ENCODE measurements at regions of chr3 and their contacts with region 1.

Region 1: DNA sequence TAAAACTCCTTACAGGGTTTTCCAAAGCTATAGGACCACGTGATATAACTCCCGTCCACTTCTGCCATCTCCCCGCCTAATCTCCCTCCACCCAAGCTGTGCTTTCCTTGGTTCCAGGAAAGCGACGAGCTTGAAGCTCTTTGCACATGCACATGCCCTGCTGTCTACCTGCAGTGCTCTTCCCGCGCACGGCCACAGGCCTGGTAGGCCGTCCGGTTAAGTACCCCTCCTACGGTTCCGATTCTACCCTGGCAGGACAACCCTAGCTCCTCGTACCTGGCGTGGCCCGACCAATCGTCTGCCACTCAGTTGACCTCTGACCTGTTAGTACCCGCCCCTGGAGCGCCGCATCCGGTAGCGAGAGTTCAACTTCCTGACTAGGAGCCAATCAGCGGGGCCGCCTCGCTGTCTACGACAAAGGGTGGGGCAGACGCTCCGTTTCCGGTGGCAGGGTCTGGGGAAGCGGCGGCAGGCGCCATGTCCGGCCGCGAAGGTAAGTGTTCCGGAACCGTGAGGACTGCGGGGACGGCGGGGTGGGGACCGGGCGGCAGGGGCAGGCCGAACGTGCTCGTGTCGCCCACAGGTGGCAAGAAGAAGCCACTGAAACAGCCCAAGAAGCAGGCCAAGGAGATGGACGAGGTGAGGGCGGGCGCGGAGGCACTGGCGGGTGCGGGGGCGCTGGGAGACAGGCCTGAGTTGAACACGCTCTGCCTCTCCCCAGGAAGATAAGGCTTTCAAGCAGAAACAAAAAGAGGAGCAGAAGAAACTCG is at the starts of genes CCDC51 and TMA7:
- DNase-seq: peak; percentile 98
- H3K4me3 Mint-ChIP-seq: peak within 1 kb of the TSS; percentile 88
- H3K27ac Mint-ChIP-seq: peak within 1 kb of the TSS; percentile 77
- H3K4me1 Mint-ChIP-seq: peaks cover 18% of the 10 kb centered on the region
- H3K27me3 Mint-ChIP-seq: no peaks in the 10 kb centered on the region
- CTCF ChIP-seq: no peak
- total RNA-seq, gene CCDC51: 31.9 and 32.5 TPM in 2 replicates
- total RNA-seq, gene TMA7: 356 and 372 TPM in 2 replicates

Region 2: DNA sequence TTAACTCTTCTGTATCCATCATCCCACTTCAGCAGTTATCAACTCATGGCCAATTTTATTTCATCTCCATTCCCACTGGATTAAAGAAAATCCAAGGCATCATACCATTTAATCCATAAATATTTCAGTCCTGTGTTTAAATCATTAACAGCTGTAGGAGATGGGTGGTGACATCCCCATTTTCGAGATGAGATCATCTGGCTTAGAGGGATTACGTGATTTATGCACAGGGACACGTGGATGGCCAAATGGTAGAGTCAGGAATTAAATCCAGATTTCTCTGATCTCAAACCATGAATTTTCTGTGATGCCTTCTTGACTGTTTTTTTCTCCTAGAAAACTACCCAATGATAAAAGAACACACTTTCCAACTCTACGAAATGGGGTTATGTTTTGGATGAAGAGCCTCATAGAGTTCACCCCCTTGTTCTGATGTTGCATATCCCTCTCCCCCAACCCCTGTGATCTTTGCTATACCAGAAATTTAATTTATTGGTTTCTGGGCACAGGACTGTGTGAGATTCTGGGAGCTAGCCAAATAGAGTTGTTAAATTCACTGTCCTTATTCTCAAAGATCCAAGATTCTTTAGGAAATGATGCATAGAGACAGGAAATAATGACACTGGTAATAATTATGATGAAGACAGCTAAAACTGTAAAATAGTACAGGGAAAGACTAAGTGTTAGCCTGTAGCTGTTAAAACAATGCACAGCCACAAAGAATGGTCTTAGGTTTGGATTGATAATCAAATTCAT is 191.7 kb before region 1 on chr3:
- CTCF ChIA-PET with region 1: interaction called, 14 read pairs
- POLR2A ChIA-PET with region 1: interaction called, 4 read pairs
- intact Hi-C with region 1: no loop called
- DNase-seq: no peak
- H3K4me3 Mint-ChIP-seq: no peak overlapping the region
- H3K27ac Mint-ChIP-seq: no peak overlapping the region
- H3K4me1 Mint-ChIP-seq: no peaks in the 10 kb centered on the region
- H3K27me3 Mint-ChIP-seq: no peaks in the 10 kb centered on the region
- CTCF ChIP-seq: no peak

Region 3: DNA sequence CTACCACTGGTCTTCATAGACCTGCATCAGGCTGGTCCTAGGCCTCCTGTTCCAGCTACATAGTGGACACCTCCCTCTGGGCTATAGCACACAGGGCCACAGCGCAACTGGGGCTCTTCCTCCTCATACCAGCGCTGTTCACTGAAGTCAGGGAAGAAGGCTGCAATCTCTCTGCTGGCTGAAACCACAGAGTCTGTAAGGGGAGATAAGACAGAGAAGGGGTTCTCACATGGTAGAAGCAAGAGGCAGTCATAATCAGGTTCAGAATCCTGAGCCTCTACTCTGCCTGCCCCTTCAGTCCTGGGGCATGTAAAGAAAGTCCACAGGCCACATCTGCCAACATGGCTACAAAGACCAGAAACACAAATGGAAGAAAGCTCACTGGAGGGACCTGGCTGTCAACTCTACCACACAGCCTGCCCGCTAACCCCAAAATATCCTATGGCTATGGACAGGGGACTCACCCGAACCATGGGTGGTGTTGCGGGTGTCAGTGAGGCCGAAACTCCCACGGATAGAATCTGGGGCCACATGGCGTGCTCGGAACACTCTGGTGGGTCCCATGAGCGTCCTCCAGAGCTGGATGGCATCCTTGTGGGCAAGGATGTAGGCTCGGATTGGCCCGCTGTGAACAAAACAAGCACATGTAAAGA is 145.3 kb before region 1 on chr3:
- CTCF ChIA-PET with region 1: interaction called, 18 read pairs
- POLR2A ChIA-PET with region 1: no interaction called
- intact Hi-C with region 1: no loop called
- DNase-seq: no peak
- H3K4me3 Mint-ChIP-seq: no peak overlapping the region
- H3K27ac Mint-ChIP-seq: no peak overlapping the region
- H3K4me1 Mint-ChIP-seq: peaks cover 4% of the 10 kb centered on the region
- H3K27me3 Mint-ChIP-seq: no peaks in the 10 kb centered on the region
- CTCF ChIP-seq: no peak

Region 4: GRCh38 chr3:48372377-48372770 is 67.6 kb before region 1 on chr3:
- CTCF ChIA-PET with region 1: interaction called, 10 read pairs
- POLR2A ChIA-PET with region 1: no interaction called
- intact Hi-C with region 1: no loop called
- DNase-seq: no peak
- H3K4me3 Mint-ChIP-seq: no peak overlapping the region
- H3K27ac Mint-ChIP-seq: no peak overlapping the region
- H3K4me1 Mint-ChIP-seq: no peaks in the 10 kb centered on the region
- H3K27me3 Mint-ChIP-seq: peaks cover 3% of the 10 kb centered on the region
- CTCF ChIP-seq: no peak

Region 5: GRCh38 chr3:48422270-48422669 is 17.7 kb before region 1 on chr3:
- CTCF ChIA-PET with region 1: interaction called, 647 read pairs
- POLR2A ChIA-PET with region 1: interaction called, 749 read pairs
- intact Hi-C with region 1: no loop called
- DNase-seq: no peak
- H3K4me3 Mint-ChIP-seq: no peak overlapping the region
- H3K27ac Mint-ChIP-seq: no peak overlapping the region
- H3K4me1 Mint-ChIP-seq: peaks cover 30% of the 10 kb centered on the region
- H3K27me3 Mint-ChIP-seq: no peaks in the 10 kb centered on the region
- CTCF ChIP-seq: no peak

Region 6: DNA sequence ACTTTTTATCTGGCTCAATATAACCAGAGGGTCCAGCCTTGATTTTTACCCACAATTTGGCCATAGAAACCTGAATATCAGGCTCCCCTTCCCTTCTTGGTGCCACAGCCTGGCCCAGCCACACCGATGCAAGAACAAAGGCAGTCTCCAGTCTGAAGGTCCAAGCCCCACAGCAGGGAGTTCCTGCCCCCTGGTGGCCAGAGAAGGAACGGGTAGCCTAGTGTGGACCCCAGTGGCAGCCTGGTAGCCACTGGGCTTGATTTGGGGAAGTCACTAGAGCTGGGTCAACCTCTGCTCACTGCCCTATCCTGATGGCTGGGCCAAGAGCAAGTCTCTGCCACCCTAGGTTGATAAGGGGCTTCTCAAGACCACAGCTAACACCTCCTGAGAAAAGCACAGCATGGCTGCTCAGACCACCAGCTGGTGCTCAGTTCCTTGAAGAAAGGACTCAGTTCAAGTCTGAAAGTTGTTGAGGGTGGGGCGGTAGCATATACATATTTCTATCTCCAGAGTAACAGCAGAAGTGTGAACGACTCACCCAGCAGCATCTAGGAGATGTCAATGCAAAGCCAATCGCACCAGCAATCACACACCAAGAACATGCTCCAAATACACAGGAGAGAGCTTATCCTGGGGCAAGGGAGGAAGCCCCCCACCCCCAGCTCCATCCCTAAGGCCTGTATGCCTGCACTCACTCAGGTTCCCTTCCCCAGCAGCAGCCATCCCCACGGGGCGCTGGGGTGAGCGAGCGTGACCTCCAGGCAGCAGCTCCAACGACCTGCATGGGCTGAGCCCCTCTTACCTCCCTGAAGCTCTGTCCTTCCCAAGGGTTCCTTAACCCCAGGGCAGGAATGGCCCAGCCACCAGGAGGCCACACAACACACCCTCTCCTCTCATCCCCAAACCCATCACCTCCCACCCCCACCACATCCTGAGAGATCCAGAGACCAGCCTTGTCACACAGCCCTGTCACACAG is 109.0 kb after region 1 on chr3:
- CTCF ChIA-PET with region 1: interaction called, 35 read pairs
- POLR2A ChIA-PET with region 1: interaction called, 4 read pairs
- intact Hi-C with region 1: loop called (anchors 5 kb)
- DNase-seq: peak; percentile 80
- H3K4me3 Mint-ChIP-seq: no peak overlapping the region
- H3K27ac Mint-ChIP-seq: no peak overlapping the region
- H3K4me1 Mint-ChIP-seq: no peaks in the 10 kb centered on the region
- H3K27me3 Mint-ChIP-seq: no peaks in the 10 kb centered on the region
- CTCF ChIP-seq: peak; percentile 97

Measured in MCF 10A (cell line).